ENCODE measurements at regions of chr5 and their contacts with region 1.

Region 1: DNA sequence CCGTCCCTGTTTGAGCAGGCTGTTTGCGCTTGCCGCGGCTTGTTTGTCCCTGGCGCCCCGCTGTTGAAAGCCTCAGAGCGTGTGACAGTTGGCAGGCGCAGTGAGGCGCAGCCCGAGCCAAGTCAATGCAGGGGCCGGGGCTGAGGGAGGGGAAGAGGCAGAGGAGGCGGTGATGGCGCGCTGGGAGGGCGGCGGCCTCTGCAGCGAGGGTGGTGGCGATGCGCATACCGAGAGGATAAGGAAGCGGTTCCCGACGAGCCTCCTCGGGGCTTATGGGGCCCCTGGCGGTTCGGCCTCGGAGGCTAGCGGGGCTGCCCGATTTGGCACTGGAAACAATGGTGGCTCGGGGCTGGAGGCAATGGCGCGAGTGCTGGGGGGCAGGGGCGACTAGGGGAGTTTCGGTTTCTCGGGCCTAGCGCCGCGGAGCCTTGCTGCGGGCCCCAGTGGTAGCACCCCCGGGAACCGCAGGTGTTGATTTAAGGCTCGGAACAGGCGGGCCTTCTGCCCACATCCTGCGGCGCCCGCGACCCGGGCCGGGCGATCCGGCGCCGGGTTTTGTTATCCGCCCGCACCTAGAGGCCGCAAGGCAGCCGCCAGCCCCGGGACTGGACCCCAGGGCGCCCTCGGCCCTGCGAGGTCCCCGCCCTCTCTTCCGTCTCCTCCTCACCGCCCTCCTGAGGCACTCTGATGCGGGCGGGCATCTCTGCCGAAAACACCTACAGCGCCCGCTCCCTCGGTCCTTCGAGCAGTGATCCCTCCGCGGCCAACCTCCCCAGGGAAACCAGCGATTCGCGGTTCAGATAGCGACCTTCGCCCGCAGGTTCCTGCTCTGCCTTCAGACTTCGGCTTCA is 947 bp upstream of the LNPEP start:
- DNase-seq: peak; percentile 96
- ATAC-seq: peak; percentile 74
- H3K4me3 Mint-ChIP-seq: peak overlapping the region; percentile 96
- H3K27ac Mint-ChIP-seq: peak overlapping the region; percentile 98
- H3K4me1 Mint-ChIP-seq: peaks cover 60% of the 10 kb centered on the region
- H3K27me3 Mint-ChIP-seq: no peaks in the 10 kb centered on the region

Region 2: DNA sequence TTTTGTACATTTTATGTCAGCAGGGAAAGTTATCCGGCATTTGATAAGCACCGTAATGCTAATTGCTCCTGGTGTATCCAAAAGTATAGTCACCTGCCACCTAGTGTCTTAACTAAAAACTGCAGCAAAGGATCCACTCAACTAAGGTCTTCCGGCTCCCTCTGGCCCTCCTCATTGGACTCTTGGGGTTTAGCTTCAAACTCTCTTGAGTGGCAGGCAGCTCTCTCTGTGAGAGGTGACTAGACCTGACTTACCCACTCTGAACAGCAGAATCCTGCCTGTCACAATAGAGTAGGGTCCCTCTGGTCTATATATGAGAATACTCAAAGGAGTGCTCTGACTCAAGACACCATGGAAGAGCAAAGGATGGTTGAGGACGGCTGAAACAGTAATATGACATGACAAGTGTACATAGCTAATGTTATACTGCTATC is 333.1 kb before region 1 on chr5:
- CTCF ChIA-PET with region 1: no interaction called
- POLR2A ChIA-PET with region 1: no interaction called
- intact Hi-C with region 1: no loop called
- DNase-seq: peak; percentile 64
- ATAC-seq: peak; percentile 69
- H3K4me3 Mint-ChIP-seq: no peak overlapping the region
- H3K27ac Mint-ChIP-seq: no peak overlapping the region
- H3K4me1 Mint-ChIP-seq: peaks cover 15% of the 10 kb centered on the region
- H3K27me3 Mint-ChIP-seq: peaks cover 5% of the 10 kb centered on the region

Region 3: GRCh38 chr5:96662725-96663513 is 272.0 kb before region 1 on chr5:
- CTCF ChIA-PET with region 1: no interaction called
- POLR2A ChIA-PET with region 1: no interaction called
- intact Hi-C with region 1: loop called (anchors 1 to 2 kb)
- DNase-seq: peak; percentile 92
- ATAC-seq: peak; percentile 80
- H3K4me3 Mint-ChIP-seq: peak overlapping the region; percentile 89
- H3K27ac Mint-ChIP-seq: peak overlapping the region; percentile 95
- H3K4me1 Mint-ChIP-seq: peaks cover 32% of the 10 kb centered on the region
- H3K27me3 Mint-ChIP-seq: peaks cover 6% of the 10 kb centered on the region

Region 4: GRCh38 chr5:96868603-96869371 is 66.1 kb before region 1 on chr5:
- CTCF ChIA-PET with region 1: interaction called, 8 read pairs
- POLR2A ChIA-PET with region 1: interaction called, 5 read pairs
- intact Hi-C with region 1: loop called (anchors 1 kb)
- DNase-seq: no peak
- ATAC-seq: peak; percentile 81
- H3K4me3 Mint-ChIP-seq: no peak overlapping the region
- H3K27ac Mint-ChIP-seq: peak overlapping the region; percentile 90
- H3K4me1 Mint-ChIP-seq: peaks cover 54% of the 10 kb centered on the region
- H3K27me3 Mint-ChIP-seq: peaks cover 1% of the 10 kb centered on the region

Region 5: DNA sequence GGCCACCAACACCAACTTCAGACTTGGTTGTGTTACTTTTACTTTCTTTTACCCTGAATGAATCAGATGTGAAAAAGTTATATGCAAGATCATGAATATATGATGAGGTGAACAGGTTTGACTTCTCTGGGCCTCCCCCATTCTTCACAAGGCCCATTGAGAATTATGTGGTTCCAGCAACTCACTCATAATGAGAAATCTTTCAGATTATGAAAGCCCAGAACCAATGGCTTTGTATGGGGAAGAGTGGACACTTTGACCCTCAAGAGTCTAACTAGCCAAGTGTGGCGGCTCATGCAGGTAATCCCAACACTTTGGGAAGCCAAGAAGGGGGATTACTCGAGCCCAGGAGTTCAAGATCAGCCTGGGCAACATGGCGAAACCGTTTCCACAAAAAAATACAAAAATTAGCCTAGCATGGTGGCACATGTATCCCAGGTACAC is 15.2 kb before region 1 on chr5:
- CTCF ChIA-PET with region 1: interaction called, 3 read pairs
- POLR2A ChIA-PET with region 1: no interaction called
- intact Hi-C with region 1: loop called (anchors 1 kb)
- DNase-seq: peak; percentile 46
- ATAC-seq: peak; percentile 89
- H3K4me3 Mint-ChIP-seq: no peak overlapping the region
- H3K27ac Mint-ChIP-seq: peak overlapping the region; percentile 51
- H3K4me1 Mint-ChIP-seq: peaks cover 49% of the 10 kb centered on the region
- H3K27me3 Mint-ChIP-seq: no peaks in the 10 kb centered on the region

Region 6: DNA sequence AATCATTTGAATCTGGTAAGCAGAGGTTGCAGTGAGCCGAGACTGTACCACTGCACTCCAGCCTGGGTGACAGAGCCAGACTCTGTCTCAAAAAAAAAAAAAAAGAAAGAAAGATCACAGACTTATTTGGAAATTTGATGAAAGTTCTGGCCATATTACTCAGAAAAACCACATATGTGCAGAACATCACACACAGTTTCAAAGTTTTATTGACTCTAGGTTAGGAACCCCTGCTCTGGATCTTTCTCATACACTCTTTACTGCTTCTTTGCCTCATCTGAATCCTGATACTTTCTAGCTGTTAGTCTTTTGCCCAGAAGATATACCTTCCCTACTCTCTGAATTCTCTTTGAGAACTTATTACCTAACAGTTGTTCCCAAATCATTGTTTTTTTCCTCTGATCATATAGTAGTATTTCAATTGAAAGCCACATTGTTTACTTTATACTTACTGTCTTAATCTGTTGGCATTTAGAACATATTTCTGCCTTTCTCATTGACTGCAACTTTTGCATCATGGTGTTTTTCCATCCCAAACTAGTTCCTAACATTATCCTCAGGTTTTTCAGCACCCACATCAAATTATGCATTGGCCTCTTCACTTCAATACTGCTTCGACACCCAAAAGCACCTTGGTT is 69.6 kb after region 1 on chr5:
- CTCF ChIA-PET with region 1: no interaction called
- POLR2A ChIA-PET with region 1: no interaction called
- intact Hi-C with region 1: loop called in 1 of 2 experiments (anchors 5 kb)
- DNase-seq: peak; percentile 39
- ATAC-seq: peak; percentile 85
- H3K4me3 Mint-ChIP-seq: no peak overlapping the region
- H3K27ac Mint-ChIP-seq: peak overlapping the region; percentile 84
- H3K4me1 Mint-ChIP-seq: peaks cover 15% of the 10 kb centered on the region
- H3K27me3 Mint-ChIP-seq: no peaks in the 10 kb centered on the region

Region 7: DNA sequence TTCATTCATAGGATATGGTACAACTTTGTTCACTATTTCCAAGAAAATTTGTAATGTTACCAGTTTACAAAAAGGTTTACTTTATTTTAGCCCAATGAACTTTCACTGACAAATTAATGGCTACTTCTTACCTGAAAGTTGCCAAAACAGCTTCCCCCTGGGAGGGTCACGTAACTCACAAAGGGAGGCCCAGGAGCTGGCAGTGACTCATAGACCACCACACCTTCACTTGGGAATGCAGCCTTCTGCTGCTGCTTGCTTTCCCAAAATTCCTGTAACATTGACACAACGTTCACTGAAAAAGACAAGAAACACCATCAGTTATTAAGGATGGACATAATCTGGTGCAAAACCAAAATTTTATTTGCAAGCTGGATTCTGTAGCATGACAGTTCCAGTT is 189.4 kb after region 1 on chr5:
- CTCF ChIA-PET with region 1: no interaction called
- POLR2A ChIA-PET with region 1: no interaction called
- intact Hi-C with region 1: no loop called
- DNase-seq: no peak
- ATAC-seq: no peak
- H3K4me3 Mint-ChIP-seq: no peak overlapping the region
- H3K27ac Mint-ChIP-seq: no peak overlapping the region
- H3K4me1 Mint-ChIP-seq: no peaks in the 10 kb centered on the region
- H3K27me3 Mint-ChIP-seq: peaks cover 18% of the 10 kb centered on the region

Region 8: GRCh38 chr5:97183100-97183929 is 248.4 kb after region 1 on chr5 and contains the start of gene RIOK2:
- CTCF ChIA-PET with region 1: no interaction called
- POLR2A ChIA-PET with region 1: no interaction called
- intact Hi-C with region 1: loop called (anchors 1 kb)
- DNase-seq: peak; percentile 96
- ATAC-seq: peak; percentile 94
- H3K4me3 Mint-ChIP-seq: peak within 1 kb of the TSS; percentile 82
- H3K27ac Mint-ChIP-seq: peak within 1 kb of the TSS; percentile 100
- H3K4me1 Mint-ChIP-seq: peaks cover 33% of the 10 kb centered on the region
- H3K27me3 Mint-ChIP-seq: no peaks in the 10 kb centered on the region
- total RNA-seq, gene RIOK2: 30.9 to 39.2 TPM

Region 9: DNA sequence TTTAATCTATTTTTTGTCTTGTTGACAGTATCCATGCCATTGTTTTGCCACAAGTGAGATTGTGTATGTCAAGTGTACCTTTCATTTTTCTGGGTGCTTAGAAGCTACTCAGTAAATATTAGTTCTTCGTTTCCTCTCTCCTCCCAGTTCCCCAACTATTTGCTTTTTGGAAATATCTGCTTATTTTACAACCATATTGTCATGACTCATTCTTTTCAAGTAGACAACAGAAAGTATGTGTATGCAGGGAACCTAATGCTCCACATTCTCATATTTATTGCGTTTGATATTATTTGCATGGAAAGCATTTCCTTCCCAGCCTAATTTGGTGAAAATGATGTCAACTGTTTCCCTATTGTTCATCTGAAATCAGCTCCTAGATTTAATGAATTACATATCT is 731.8 kb after region 1 on chr5:
- CTCF ChIA-PET with region 1: no interaction called
- POLR2A ChIA-PET with region 1: no interaction called
- intact Hi-C with region 1: no loop called
- DNase-seq: no peak
- ATAC-seq: no peak
- H3K4me3 Mint-ChIP-seq: no peak overlapping the region
- H3K27ac Mint-ChIP-seq: no peak overlapping the region
- H3K4me1 Mint-ChIP-seq: no peaks in the 10 kb centered on the region
- H3K27me3 Mint-ChIP-seq: no peaks in the 10 kb centered on the region